Cardiac septum (tissue), 1 donor: ENCODE measurements at regions of chr4 and their contacts with region 1.

Region 1: GRCh38 chr4:38023347-38024205 is 63.4 kb downstream of the PTTG2 start:
- DNase-seq: no peak

Region 2: DNA sequence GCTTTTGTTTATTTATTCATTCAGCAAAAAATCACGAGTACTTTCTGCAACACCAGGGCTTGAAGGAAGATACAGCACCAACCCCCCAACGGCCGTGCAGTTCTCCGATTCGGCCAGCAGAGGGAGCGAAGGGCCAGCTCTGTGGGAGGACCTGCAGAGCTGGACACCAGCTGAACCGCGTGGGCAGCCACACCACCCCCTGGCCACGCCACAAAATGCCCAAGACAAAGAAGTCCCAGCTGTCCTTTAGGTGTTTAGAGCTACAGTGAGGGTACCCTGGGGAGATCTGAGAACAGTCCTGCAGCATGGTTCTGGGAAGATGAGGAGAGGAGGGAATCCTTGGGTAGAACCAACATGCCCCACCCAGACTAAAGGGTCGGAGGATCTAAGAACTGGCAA is 420.5 kb before region 1 on chr4:
- intact Hi-C with region 1: loop called (anchors 10 kb)
- DNase-seq: peak; percentile 93

Region 3: GRCh38 chr4:37639551-37640285 is 383.9 kb before region 1 on chr4:
- intact Hi-C with region 1: no loop called
- DNase-seq: no peak

Region 4: DNA sequence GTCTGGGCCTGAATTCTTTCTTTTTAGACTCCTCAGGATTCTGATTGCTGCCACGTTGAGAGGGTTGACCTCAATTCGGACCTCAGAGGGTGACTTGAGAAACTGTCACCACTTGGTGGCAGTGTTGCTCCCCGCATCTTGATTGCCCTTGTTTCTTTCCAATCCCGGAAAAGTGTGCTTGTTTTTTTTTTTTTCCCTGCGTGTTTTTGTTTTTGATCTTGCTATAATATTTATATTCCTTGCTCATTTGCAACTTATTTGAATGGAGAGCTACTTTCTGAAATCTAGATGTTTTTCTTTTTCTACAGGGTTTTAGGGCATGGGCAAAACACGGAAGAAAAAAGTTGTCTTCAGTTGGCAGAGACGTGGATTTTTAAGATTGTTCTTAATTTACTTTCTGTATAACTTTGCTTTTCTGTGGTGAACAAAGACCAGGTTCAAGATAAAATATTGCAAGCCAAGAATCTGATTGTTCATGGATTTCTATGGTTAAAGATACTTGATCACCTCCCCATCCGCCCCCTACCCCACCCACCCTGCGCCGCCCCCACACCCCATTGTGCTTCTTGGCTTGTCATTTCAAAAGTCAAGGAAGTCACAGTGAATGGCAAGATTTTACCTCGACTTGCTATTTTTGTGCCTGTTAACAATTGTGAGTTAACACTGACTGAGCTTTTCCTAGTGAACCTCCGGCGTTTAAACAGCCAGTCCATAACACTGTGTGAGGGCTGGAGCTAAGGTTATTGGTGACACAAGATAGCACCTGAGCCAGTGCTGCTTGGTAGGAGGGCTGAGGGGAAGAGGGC is 38.7 kb after region 1 on chr4:
- intact Hi-C with region 1: no loop called
- DNase-seq: no peak